ENCODE measurements at regions of chr13 and their contacts with region 1.

Region 1: DNA sequence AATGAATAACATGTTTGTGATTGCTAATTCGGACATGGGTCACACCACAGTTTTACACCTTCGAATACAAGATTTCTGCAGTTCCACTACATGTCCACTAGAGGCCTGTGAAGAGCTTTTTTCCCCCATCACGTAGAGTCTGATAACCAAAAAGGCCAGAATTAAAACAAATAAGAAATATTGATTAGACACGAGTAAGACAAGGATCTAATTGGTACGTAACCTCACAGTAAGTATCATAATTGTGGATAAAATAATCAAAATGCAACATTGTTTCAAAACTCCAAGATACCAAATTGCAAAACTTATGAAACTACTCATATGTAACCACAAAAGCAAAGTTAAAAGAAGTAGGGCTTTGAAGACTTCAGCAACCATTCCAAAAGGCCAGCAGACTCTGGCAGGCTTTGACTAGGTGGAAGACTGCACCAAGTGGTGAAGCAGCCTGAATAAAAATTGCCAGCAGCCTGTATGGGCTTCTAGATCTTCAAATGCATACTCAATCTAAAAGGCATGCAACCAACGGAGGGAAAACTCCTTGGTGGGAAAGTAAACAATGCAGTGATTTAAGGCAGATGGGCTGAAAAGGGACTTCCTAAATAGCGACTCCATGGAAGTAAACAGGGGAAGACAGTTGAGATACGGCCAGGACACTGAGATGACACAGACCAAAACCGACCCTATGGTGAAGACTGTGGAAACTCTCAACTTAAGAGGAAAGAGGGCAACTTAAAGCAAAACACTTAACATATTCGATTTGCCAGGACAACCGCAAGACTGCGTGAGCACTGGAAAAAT is 56.7 kb downstream of the STARD13 start:
- DNase-seq: no peak
- ATAC-seq: peak; percentile 74
- H3K4me3 ChIP-seq: no peak overlapping the region
- H3K27ac ChIP-seq: no peak overlapping the region
- H3K4me1 ChIP-seq: peaks cover 0 to 1% of the 10 kb centered on the region in 2 donors
- H3K27me3 ChIP-seq: no peaks in the 10 kb centered on the region

Region 2: GRCh38 chr13:33004511-33004910 is 224.3 kb before region 1 on chr13:
- intact Hi-C with region 1: no loop called
- DNase-seq: peak in 1 of 2 donors; percentile 59
- ATAC-seq: peak; percentile 48
- H3K4me3 ChIP-seq: no peak overlapping the region
- H3K27ac ChIP-seq: no peak overlapping the region
- H3K4me1 ChIP-seq: no peaks in the 10 kb centered on the region
- H3K27me3 ChIP-seq: no peaks in the 10 kb centered on the region

Region 3: GRCh38 chr13:33349986-33350826 is 121.4 kb after region 1 on chr13:
- intact Hi-C with region 1: loop called in 1 of 2 experiments (anchors 10 kb)
- DNase-seq: peak; percentile 81 to 89
- ATAC-seq: peak; percentile 85
- H3K4me3 ChIP-seq: peak overlapping the region; percentile 74 to 84
- H3K27ac ChIP-seq: peak overlapping the region; percentile 33 to 84
- H3K4me1 ChIP-seq: no peaks in the 10 kb centered on the region
- H3K27me3 ChIP-seq: no peaks in the 10 kb centered on the region

Region 4: DNA sequence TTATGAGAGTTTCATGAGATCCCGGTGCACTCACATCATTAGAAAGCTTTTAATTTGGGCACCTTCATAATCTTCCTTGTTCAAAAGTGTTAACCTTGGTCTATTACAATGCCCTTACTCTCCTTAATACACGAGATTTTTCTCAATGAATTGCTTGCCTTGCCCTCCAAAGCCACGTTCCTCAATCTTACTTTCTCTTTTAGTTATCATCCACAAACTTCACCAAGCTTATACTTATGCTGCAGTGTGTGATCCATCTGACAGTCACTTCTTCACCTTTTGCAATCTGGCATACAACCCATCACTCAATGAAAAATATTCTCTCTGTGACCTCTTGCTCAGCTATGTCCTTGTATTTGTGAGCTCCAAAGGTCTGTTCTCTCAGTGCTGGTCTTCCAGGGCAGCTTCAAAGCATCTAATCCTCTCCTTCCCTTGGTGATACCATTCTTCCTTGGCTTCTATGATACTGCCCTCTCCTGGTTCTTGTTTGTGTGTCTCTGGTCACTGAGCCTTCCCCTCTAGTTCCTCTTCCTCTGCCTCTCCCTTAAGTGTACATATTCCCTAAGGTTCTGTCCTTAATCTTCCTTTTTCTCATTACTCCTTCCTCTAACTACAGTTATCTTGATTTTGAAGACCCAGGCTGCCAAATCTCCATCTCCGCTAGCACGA is 258.9 kb after region 1 on chr13:
- intact Hi-C with region 1: loop called in 1 of 2 experiments (anchors 5 kb)
- DNase-seq: no peak
- ATAC-seq: peak; percentile 88
- H3K4me3 ChIP-seq: peak overlapping the region; percentile 20 to 87
- H3K27ac ChIP-seq: peak overlapping the region in 1 of 2 donors; percentile 40
- H3K4me1 ChIP-seq: no peaks in the 10 kb centered on the region
- H3K27me3 ChIP-seq: no peaks in the 10 kb centered on the region

Region 5: GRCh38 chr13:33723772-33724435 is 495.1 kb after region 1 on chr13:
- intact Hi-C with region 1: loop called (anchors 5 to 10 kb)
- DNase-seq: peak in 1 of 2 donors; percentile 82
- ATAC-seq: peak; percentile 87
- H3K4me3 ChIP-seq: no peak overlapping the region
- H3K27ac ChIP-seq: no peak overlapping the region
- H3K4me1 ChIP-seq: no peaks in the 10 kb centered on the region
- H3K27me3 ChIP-seq: no peaks in the 10 kb centered on the region

Measured in aorta (tissue), 5 donors.